Activated naive CD4-positive, alpha-beta T cell treated with anti-CD3 and anti-CD28 coated beads for 36 hours (primary cell): ENCODE measurements at regions of chr20 and their contacts with region 1.

Region 1: GRCh38 chr20:57709931-57710799 is at the start of gene PMEPA1:
- DNase-seq: peak; percentile 91
- H3K4me3 Mint-ChIP-seq: peak within 1 kb of the TSS; percentile 79
- H3K27ac Mint-ChIP-seq: peak within 1 kb of the TSS; percentile 68
- H3K4me1 Mint-ChIP-seq: peaks cover 17% of the 10 kb centered on the region
- H3K27me3 Mint-ChIP-seq: peaks cover 6% of the 10 kb centered on the region
- total RNA-seq, gene PMEPA1: 2.0 to 2.2 TPM

Region 2: DNA sequence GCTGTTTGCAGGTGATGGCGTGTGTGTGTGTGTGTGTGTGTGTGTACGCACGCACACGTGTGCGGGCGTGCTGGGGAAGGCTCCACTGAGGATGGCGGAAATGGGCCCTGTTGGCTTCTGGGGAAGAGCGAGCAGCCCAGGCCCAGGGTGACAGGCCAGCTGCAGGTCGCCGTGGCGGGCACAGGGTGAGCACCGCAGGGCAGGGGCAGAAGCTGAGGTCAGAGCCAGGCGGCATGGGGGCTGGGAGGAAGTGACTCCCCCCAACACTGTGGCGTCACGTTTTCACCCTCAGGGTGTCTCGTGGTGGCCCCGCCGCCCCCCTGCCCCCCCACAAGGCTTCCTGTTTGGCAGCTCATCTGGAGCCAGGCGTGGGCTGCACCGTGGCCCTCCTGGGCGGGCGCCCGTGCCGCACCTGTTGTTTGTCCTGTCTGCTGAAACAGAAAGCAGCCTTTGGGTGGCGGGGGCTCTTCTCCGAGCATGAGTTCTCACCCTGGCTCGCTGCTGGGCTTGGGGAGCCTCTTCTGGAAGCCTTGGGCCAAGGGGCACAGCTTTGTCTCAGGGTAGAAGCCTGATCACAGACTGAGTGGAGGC is 311.8 kb before region 1 on chr20:
- CTCF ChIA-PET with region 1: no interaction called
- intact Hi-C with region 1: loop called (anchors 2 kb)
- DNase-seq: peak; percentile 91
- H3K4me3 Mint-ChIP-seq: peak overlapping the region; percentile 80
- H3K27ac Mint-ChIP-seq: peak overlapping the region; percentile 99
- H3K4me1 Mint-ChIP-seq: peaks cover 93% of the 10 kb centered on the region
- H3K27me3 Mint-ChIP-seq: no peaks in the 10 kb centered on the region

Region 3: DNA sequence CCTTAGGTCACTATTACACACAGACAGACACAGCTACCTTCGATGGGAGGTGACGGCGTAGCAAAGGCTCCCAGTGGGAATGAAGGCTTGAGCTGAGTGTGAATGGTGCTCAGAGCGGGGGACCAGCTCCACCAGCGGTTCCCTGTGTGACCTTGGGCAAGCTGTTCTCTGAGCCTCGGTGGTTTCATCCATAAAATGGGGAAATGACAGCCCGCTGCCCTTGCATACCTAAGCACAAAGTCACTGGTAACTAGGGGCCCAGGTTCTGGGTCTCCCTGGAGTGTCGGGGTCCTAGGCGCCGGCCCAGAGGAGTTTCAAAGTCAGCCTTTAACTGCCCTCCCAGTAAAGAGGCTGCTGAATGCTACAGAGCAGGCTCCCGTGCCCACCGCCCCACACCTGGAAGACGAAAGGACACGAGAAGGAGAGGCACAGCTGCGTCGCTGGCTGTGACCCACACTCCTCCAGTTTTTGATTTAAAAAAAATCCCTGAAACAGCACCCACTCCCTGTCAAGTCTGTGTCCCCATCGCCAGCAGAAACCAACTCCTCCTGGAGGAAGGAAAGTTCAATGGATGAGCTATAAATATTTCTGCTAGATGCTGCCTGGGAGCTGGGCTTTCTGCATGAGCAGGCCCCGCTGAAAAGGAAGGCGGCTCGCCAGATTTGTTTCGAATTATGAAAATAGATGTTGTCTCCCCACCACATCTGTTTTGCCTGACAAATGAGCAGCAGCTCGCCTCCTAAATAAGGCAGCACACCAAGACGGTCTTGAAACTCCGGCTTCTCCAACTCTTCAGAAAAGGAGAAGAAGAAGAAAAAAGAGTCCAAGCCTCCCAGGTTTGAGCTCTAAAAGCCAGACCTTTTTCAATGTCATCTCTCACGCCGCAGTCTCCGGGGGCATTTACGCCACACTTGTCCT is 27.7 kb before region 1 on chr20:
- CTCF ChIA-PET with region 1: no interaction called
- intact Hi-C with region 1: no loop called
- DNase-seq: no peak
- H3K4me3 Mint-ChIP-seq: no peak overlapping the region
- H3K27ac Mint-ChIP-seq: no peak overlapping the region
- H3K4me1 Mint-ChIP-seq: peaks cover 19% of the 10 kb centered on the region
- H3K27me3 Mint-ChIP-seq: no peaks in the 10 kb centered on the region

Region 4: GRCh38 chr20:57748601-57749130 is 38.5 kb after region 1 on chr20:
- CTCF ChIA-PET with region 1: no interaction called
- intact Hi-C with region 1: loop called (anchors 2 kb)
- DNase-seq: peak; percentile 75
- H3K4me3 Mint-ChIP-seq: peak overlapping the region; percentile 12
- H3K27ac Mint-ChIP-seq: no peak overlapping the region
- H3K4me1 Mint-ChIP-seq: peaks cover 16% of the 10 kb centered on the region
- H3K27me3 Mint-ChIP-seq: peaks cover 8% of the 10 kb centered on the region

Region 5: GRCh38 chr20:57810511-57811373 is 100.6 kb after region 1 on chr20:
- CTCF ChIA-PET with region 1: no interaction called
- intact Hi-C with region 1: no loop called
- DNase-seq: no peak
- H3K4me3 Mint-ChIP-seq: no peak overlapping the region
- H3K27ac Mint-ChIP-seq: no peak overlapping the region
- H3K4me1 Mint-ChIP-seq: no peaks in the 10 kb centered on the region
- H3K27me3 Mint-ChIP-seq: no peaks in the 10 kb centered on the region

Region 6: GRCh38 chr20:57902290-57902872 is 192.2 kb after region 1 on chr20:
- CTCF ChIA-PET with region 1: no interaction called
- intact Hi-C with region 1: no loop called
- DNase-seq: no peak
- H3K4me3 Mint-ChIP-seq: no peak overlapping the region
- H3K27ac Mint-ChIP-seq: no peak overlapping the region
- H3K4me1 Mint-ChIP-seq: no peaks in the 10 kb centered on the region
- H3K27me3 Mint-ChIP-seq: peaks cover 6% of the 10 kb centered on the region

Region 7: GRCh38 chr20:58014628-58015315 is 304.6 kb after region 1 on chr20:
- CTCF ChIA-PET with region 1: no interaction called
- intact Hi-C with region 1: loop called (anchors 1 kb)
- DNase-seq: peak; percentile 57
- H3K4me3 Mint-ChIP-seq: no peak overlapping the region
- H3K27ac Mint-ChIP-seq: peak overlapping the region; percentile 15
- H3K4me1 Mint-ChIP-seq: peaks cover 22% of the 10 kb centered on the region
- H3K27me3 Mint-ChIP-seq: peaks cover 13% of the 10 kb centered on the region

Region 8: DNA sequence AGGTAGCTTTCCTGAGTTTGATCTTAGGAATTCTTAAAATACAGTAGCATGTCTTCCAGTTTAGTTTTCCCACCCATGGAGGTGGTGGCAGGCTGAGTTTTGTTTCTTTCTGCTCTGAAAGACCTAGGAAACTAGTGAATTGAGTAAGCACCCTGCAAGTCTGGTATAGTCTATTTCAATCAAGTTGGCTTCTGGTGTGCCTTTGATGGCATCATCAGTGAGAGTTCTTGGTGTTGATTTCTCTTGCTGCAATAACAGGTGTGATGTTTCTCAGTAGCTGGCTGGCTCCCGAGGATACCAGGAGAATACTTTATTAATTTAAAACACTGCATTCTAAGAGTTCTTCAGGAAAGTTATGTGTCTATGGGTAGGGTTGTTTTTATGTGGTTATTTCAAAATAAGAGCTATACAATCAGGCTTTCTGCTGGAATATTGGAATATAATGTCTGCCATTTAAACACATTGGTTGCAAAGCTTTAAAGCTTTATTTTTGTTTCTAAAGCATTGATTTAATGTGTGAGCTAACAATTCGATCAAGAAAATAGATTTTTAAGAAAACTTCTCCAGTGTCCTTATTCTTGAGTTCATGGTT is 697.9 kb after region 1 on chr20:
- CTCF ChIA-PET with region 1: no interaction called
- intact Hi-C with region 1: no loop called
- DNase-seq: peak; percentile 63
- H3K4me3 Mint-ChIP-seq: peak overlapping the region; percentile 7
- H3K27ac Mint-ChIP-seq: peak overlapping the region; percentile 81
- H3K4me1 Mint-ChIP-seq: peaks cover 30% of the 10 kb centered on the region
- H3K27me3 Mint-ChIP-seq: no peaks in the 10 kb centered on the region